MCF 10A (cell line): ENCODE measurements at regions of chr1 and their contacts with region 1.

Region 1: GRCh38 chr1:221435504-221435904 is 306.4 kb downstream of the DUSP10 start:
- DNase-seq: peak; percentile 80
- H3K4me3 Mint-ChIP-seq: no peak overlapping the region
- H3K27ac Mint-ChIP-seq: no peak overlapping the region
- H3K4me1 Mint-ChIP-seq: peaks cover 26% of the 10 kb centered on the region
- H3K27me3 Mint-ChIP-seq: no peaks in the 10 kb centered on the region
- CTCF ChIP-seq: peak; percentile 99

Region 2: DNA sequence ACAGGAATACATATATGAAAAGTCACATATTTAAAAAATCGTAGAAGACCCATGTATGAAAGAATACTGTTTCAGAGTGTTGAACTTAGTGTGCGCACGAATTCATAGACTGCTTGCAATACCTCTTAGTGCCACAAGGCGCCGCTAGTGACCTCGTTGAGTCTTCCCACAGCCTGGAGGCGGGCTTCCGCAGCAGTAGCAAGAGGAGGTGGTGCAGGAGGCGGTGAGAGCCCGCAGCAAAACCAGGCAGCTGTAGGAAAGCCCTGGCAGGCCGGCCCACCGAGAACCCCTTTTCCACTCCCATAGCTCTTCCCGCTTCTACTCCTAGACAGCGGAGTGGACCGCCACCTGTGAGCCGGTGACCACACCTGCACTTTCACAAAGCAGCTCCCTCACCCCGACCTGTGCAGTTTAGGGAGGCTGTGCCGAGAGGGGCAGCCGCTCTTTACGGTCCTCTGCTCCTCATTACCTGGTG is 625.3 kb before region 1 on chr1:
- CTCF ChIA-PET with region 1: interaction called, 37 read pairs
- POLR2A ChIA-PET with region 1: interaction called, 3 read pairs
- intact Hi-C with region 1: loop called (anchors 2 kb)
- DNase-seq: peak; percentile 91
- H3K4me3 Mint-ChIP-seq: no peak overlapping the region
- H3K27ac Mint-ChIP-seq: no peak overlapping the region
- H3K4me1 Mint-ChIP-seq: no peaks in the 10 kb centered on the region
- H3K27me3 Mint-ChIP-seq: no peaks in the 10 kb centered on the region
- CTCF ChIP-seq: peak; percentile 99

Region 3: DNA sequence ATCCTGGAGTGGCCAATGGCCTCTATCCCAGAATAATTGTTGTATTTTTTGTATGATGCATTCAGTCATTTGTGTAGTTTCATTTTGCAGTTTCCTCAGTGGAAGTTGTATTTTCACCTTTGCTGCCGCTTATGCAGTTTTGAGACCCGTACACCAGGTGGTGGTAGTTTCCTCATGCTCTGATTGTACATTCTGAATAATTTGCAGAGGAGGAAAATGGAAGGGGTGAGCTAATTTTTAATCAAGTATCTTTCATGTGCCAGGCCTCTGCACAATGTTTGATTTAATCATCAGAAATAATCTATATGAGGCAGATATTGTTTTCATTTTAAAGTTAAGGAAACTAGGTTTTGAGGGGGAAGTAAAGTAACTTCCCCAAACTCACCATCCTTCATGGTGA is 526.7 kb before region 1 on chr1:
- CTCF ChIA-PET with region 1: interaction called, 81 read pairs
- POLR2A ChIA-PET with region 1: interaction called, 3 read pairs
- intact Hi-C with region 1: no loop called
- DNase-seq: peak; percentile 56
- H3K4me3 Mint-ChIP-seq: no peak overlapping the region
- H3K27ac Mint-ChIP-seq: no peak overlapping the region
- H3K4me1 Mint-ChIP-seq: peaks cover 21% of the 10 kb centered on the region
- H3K27me3 Mint-ChIP-seq: no peaks in the 10 kb centered on the region
- CTCF ChIP-seq: peak; percentile 58

Region 4: GRCh38 chr1:221035680-221036153 is 399.8 kb before region 1 on chr1:
- CTCF ChIA-PET with region 1: interaction called, 11 read pairs
- POLR2A ChIA-PET with region 1: no interaction called
- intact Hi-C with region 1: no loop called
- DNase-seq: peak; percentile 83
- H3K4me3 Mint-ChIP-seq: peak overlapping the region; percentile 69
- H3K27ac Mint-ChIP-seq: peak overlapping the region; percentile 74
- H3K4me1 Mint-ChIP-seq: peaks cover 10% of the 10 kb centered on the region
- H3K27me3 Mint-ChIP-seq: no peaks in the 10 kb centered on the region
- CTCF ChIP-seq: no peak

Region 5: DNA sequence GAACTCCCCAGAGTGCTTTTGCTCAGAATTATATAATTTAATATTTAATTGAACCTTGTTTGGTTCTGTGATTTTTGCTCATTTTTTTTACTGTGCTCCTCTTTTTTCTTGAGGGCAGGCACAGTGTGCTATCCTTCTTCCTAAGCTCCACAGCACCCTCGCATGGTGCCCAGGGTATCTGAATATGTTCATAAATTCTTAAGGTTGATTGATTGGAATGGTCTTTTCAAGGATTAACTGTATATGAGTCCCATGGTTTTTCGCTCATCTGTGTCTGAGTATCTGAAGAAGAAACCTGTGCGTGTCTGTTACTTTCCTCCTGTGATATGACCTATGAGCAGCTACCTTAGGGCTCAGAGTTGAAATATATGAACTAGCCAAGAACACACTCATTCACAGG is 162.6 kb before region 1 on chr1:
- CTCF ChIA-PET with region 1: interaction called, 11 read pairs
- POLR2A ChIA-PET with region 1: no interaction called
- intact Hi-C with region 1: no loop called
- DNase-seq: no peak
- H3K4me3 Mint-ChIP-seq: no peak overlapping the region
- H3K27ac Mint-ChIP-seq: no peak overlapping the region
- H3K4me1 Mint-ChIP-seq: no peaks in the 10 kb centered on the region
- H3K27me3 Mint-ChIP-seq: no peaks in the 10 kb centered on the region
- CTCF ChIP-seq: no peak

Region 6: DNA sequence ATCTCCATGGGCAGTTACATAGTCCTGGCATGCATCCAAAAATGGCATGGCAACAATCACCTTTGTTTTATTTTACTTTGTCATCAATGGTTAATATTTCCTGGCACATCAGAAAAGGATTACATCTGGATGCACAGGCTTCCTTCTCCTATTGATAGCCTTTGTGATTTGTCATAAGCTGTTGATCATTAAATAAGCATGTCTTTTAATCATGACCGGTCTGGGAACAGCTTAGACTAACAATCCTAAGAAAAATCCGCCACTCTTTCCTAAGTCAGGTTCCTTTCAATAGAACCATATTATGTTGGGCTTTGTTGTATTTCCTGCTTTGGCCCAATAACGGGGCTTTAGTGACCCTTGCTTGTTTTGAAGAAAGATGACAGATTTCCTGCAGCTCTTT is 24.2 kb before region 1 on chr1:
- CTCF ChIA-PET with region 1: interaction called, 28 read pairs
- POLR2A ChIA-PET with region 1: no interaction called
- intact Hi-C with region 1: no loop called
- DNase-seq: no peak
- H3K4me3 Mint-ChIP-seq: no peak overlapping the region
- H3K27ac Mint-ChIP-seq: no peak overlapping the region
- H3K4me1 Mint-ChIP-seq: peaks cover 6% of the 10 kb centered on the region
- H3K27me3 Mint-ChIP-seq: no peaks in the 10 kb centered on the region
- CTCF ChIP-seq: no peak